ENCODE measurements at regions of chr3 and their contacts with region 1.

Region 1: GRCh38 chr3:49007068-49007770 is at the start of gene WDR6:
- DNase-seq: peak; percentile 99
- H3K4me3 Mint-ChIP-seq: peak within 1 kb of the TSS; percentile 95
- H3K27ac Mint-ChIP-seq: peak within 1 kb of the TSS; percentile 98
- H3K4me1 Mint-ChIP-seq: peaks cover 21% of the 10 kb centered on the region
- H3K27me3 Mint-ChIP-seq: no peaks in the 10 kb centered on the region
- total RNA-seq, gene WDR6: 139 to 144 TPM

Region 2: DNA sequence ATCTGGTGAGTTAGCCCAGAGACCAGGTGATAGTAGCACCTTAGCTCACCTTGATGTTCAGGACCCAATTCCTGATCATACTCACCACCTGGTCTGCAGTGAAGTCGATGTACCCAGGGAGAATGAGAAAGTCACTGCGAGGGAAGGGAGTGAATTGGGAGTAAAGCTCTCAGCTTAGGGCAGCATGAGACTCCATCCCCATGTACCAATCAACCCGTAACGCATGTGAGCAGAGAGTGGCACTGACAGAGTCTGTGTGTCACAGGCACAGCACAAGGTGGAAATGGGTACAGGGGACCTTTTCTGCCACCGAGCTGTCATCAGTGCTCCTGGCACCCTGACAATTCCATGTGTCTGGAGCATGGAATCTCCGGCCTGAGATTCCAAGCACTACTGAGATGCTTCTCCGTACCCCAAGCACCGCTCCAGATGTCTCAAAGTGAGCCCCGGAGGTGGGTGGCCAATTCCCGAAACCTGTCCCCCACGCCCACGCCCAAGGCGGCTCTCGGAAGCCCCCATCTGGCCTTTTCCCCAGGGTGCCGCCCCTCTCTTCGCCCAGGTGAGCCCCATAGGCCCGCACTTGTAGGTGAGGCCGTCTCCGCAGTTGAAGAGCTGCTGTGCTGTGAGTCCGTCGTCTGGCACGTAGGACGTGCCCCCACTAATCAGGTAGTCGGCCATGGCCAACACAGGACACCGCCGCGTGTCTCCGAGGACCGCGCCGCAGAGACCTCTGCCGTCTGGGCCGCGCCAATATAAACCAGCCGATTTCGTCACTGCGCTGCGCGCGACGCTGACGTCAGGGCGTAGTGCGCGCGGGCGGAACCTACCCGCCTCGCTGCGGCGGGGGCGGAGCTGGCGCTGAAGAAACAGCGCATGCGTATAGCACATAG is 21.7 kb after region 1 on chr3 and contains the start of gene IMPDH2:
- CTCF ChIA-PET with region 1: interaction called, 5 read pairs
- POLR2A ChIA-PET with region 1: interaction called, 135 read pairs
- intact Hi-C with region 1: no loop called
- DNase-seq: peak; percentile 95
- H3K4me3 Mint-ChIP-seq: peak within 1 kb of the TSS; percentile 86
- H3K27ac Mint-ChIP-seq: peak within 1 kb of the TSS; percentile 89
- H3K4me1 Mint-ChIP-seq: peaks cover 43% of the 10 kb centered on the region
- H3K27me3 Mint-ChIP-seq: no peaks in the 10 kb centered on the region
- total RNA-seq, gene IMPDH2: 430 to 454 TPM

Region 3: DNA sequence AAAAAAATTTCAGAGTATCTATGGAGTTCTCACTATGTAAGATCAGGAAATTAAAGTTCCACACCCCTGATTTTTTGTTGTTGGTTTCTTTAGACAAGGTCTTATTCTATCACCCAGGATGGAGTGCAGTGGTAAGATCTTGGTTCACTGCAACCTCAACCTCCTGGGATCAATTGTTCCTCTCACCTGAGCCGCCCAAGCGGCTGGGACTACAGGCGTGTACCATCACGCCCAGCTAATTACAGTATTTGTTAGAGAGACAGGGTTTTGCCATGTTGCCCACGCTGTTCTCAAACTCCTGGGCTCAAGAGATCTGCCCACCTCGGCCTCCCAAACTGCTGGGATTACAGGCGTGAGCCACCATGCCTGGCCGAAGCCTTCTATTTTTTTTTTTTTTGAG is 74.2 kb after region 1 on chr3:
- CTCF ChIA-PET with region 1: no interaction called
- POLR2A ChIA-PET with region 1: no interaction called
- intact Hi-C with region 1: no loop called
- DNase-seq: no peak
- H3K4me3 Mint-ChIP-seq: no peak overlapping the region
- H3K27ac Mint-ChIP-seq: no peak overlapping the region
- H3K4me1 Mint-ChIP-seq: peaks cover 7% of the 10 kb centered on the region
- H3K27me3 Mint-ChIP-seq: no peaks in the 10 kb centered on the region

Measured in activated CD4-positive, alpha-beta memory T cell treated with anti-CD3 and anti-CD28 coated beads for 36 hours (primary cell).